GM12878 (cell line): ENCODE measurements at regions of chr2 and their contacts with region 1.

Region 1: GRCh38 chr2:33475224-33476130 is 972 bp upstream of the RASGRP3 start:
- DNase-seq: no peak
- ATAC-seq: peak; percentile 64
- H3K4me3 ChIP-seq: peak overlapping the region; percentile 91
- H3K27ac ChIP-seq: peak overlapping the region; percentile 97
- H3K4me1 ChIP-seq: peaks cover 3% of the 10 kb centered on the region; the same call in 1 of the 2 replicates
- H3K27me3 ChIP-seq: no peaks in the 10 kb centered on the region
- CTCF ChIP-seq: peak; percentile 86 to 93 (median 88)
- EP300 ChIP-seq: peak in 1 of 2 experiments; percentile 37; a peak in 1 of 4 replicates
- POLR2A ChIP-seq: peak; percentile 3; the same call in 1 of the 2 replicates
- RAD21 ChIP-seq: peak; percentile 74

Region 2: DNA sequence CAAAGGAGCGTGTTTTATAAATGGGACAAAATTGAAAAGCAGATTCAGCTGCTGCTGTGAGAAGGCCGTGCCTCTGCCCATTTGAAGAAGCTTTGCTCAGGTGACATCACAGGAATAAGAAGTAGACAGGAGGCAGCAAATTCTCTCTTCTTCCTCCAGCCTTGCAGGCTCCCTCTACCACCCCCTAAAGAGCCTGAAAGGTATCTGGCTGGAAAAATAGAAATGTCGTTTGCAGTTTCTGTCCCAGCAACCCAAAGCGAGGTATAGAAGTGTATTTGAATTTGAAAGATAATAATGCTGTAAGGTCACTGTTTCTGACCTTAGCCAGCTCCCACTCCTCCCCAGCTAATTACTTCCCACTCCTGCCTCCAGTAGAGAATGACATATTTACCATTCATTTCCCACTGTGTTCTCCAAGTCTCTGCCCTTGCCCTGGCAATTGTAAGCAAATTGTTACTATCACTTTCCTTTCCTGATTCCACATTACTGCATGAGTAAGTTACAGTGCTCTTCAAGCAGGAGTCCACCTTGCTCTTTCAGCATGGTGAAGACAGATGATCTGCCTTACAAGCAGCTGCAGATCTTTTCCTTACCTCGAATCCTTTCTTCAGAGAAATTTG is 55.8 kb before region 1 on chr2:
- CTCF ChIA-PET with region 1: no interaction called
- POLR2A ChIA-PET with region 1: no interaction called
- RAD21 ChIA-PET with region 1: no interaction called
- SMC1A ChIA-PET with region 1: no interaction called
- in situ Hi-C with region 1: no loop called
- intact Hi-C with region 1: no loop called
- DNase-seq: no peak
- ATAC-seq: no peak; the same call in 2 of the 3 replicates
- H3K4me3 ChIP-seq: no peak overlapping the region
- H3K27ac ChIP-seq: no peak overlapping the region
- H3K4me1 ChIP-seq: no peaks in the 10 kb centered on the region
- H3K27me3 ChIP-seq: no peaks in the 10 kb centered on the region
- CTCF ChIP-seq: no peak
- EP300 ChIP-seq: no peak
- POLR2A ChIP-seq: no peak
- RAD21 ChIP-seq: no peak

Region 3: DNA sequence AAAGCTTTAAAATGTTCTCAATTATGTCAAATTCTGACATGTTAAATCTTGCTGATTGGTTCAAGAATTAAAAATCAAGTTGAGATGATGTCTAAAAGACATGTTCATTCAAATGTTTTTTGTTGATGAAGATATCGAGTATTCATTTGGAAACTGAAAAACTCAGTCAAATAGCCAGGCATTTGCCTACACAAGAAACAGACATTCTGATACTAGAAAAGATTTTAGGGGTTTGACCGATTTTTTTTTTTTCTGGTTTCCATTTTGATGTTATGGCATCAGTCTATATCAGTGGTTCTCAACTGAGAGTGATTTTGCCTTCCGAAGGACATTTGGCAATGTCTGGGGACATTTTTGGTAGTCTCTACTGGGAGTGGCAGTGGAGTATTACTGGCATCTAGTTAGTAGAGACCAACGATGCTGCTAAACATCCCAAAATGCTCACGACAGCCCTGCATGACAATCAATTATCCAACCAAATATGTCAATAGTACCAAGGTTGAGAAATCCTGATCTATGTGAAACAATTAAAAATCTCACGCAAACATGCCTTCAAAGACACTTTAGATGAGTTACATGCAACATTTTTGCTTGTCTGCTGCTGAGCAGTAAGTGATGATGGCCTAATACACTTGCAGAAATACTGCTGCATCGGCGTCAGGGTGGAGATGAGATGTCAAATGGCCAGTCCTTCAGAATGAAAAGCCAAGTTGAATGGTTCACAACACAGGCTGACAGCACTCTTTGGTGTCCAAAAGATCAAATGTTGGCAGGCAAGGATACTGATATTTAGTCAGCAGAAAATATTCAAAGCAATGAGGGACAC is 13.5 kb after region 1 on chr2:
- CTCF ChIA-PET with region 1: interaction called, 26 read pairs
- POLR2A ChIA-PET with region 1: interaction called, 36 read pairs
- RAD21 ChIA-PET with region 1: interaction called, 222 read pairs
- SMC1A ChIA-PET with region 1: interaction called, 258 read pairs
- in situ Hi-C with region 1: no loop called
- intact Hi-C with region 1: no loop called
- DNase-seq: no peak
- ATAC-seq: peak; percentile 73
- H3K4me3 ChIP-seq: peak overlapping the region; percentile 31; the same call in 1 of the 2 replicates
- H3K27ac ChIP-seq: peak overlapping the region; percentile 94
- H3K4me1 ChIP-seq: peaks cover 79% of the 10 kb centered on the region
- H3K27me3 ChIP-seq: no peaks in the 10 kb centered on the region
- CTCF ChIP-seq: no peak
- EP300 ChIP-seq: peak in 1 of 2 experiments; percentile 48; a peak in 1 of 4 replicates
- POLR2A ChIP-seq: no peak
- RAD21 ChIP-seq: no peak

Region 4: DNA sequence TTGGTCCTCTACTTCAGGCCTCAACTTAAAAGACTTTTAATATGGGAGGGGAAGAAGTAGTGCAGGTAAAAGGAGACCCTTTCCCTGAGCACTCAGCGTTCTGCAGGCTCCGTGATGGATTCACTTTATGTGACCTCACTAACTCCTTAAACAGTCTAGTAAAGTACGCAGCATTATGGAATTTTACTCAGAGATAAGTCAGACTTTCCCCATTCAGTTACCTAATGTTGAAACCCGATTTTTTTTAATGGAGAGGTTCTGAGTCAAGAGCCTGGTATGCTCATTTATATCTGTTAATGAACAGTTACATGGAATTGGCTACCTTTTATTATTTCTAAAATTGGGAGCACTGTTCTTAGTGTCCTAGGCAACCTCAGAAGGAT is 35.1 kb after region 1 on chr2:
- CTCF ChIA-PET with region 1: interaction called, 6 read pairs
- POLR2A ChIA-PET with region 1: no interaction called
- RAD21 ChIA-PET with region 1: no interaction called
- SMC1A ChIA-PET with region 1: interaction called, 5 read pairs
- in situ Hi-C with region 1: no loop called
- intact Hi-C with region 1: loop called (anchors 5 kb)
- DNase-seq: no peak
- ATAC-seq: no peak
- H3K4me3 ChIP-seq: no peak overlapping the region
- H3K27ac ChIP-seq: no peak overlapping the region
- H3K4me1 ChIP-seq: no peaks in the 10 kb centered on the region; the same call in 1 of the 2 replicates
- H3K27me3 ChIP-seq: no peaks in the 10 kb centered on the region
- CTCF ChIP-seq: no peak
- EP300 ChIP-seq: no peak
- POLR2A ChIP-seq: no peak
- RAD21 ChIP-seq: no peak

Region 5: DNA sequence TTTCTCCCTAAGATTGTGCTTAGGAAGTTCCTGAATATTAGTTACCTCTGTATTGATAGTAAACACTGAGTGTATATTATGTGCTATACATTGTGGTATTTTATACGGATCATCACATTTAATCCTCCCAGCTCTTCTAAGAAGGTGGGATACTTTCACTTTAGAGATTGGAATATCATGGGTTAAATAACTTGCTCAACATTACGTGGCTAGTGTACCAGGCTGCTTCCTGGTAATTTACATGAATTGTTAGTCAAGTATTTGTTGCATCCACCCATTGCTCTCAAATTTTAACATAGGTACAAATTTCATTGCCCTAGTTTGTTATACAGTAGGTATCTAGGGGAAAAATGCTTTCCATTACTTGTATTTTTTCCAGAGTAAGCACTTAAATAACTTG is 102.2 kb after region 1 on chr2:
- CTCF ChIA-PET with region 1: interaction called, 84 read pairs
- POLR2A ChIA-PET with region 1: interaction called, 5 read pairs
- RAD21 ChIA-PET with region 1: interaction called, 104 read pairs
- SMC1A ChIA-PET with region 1: interaction called, 85 read pairs
- in situ Hi-C with region 1: no loop called
- intact Hi-C with region 1: loop called (anchors 2 kb)
- DNase-seq: no peak
- ATAC-seq: no peak
- H3K4me3 ChIP-seq: no peak overlapping the region
- H3K27ac ChIP-seq: no peak overlapping the region
- H3K4me1 ChIP-seq: no peaks in the 10 kb centered on the region
- H3K27me3 ChIP-seq: no peaks in the 10 kb centered on the region
- CTCF ChIP-seq: no peak
- EP300 ChIP-seq: no peak
- POLR2A ChIP-seq: no peak
- RAD21 ChIP-seq: no peak

Region 6: DNA sequence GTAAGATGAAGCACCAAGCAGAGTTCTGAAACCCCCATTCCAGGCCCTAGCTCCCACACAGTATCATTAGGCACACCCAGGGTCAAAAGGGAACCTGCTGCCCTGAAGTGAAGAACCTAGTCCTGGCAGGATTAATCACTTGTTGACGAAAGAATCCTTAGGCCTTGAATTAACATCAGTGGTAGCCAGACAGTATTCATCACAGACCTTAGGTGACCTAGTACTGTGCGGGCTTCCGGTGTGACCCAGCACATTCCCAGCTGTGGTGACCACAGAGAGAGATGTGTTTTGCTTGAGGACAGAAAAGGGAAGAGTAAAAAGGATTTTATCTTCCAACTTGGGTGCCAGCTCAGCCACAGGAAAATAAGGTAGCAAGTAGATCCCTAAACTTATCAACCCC is 1195.0 kb after region 1 on chr2:
- CTCF ChIA-PET with region 1: no interaction called
- POLR2A ChIA-PET with region 1: no interaction called
- RAD21 ChIA-PET with region 1: no interaction called
- SMC1A ChIA-PET with region 1: no interaction called
- in situ Hi-C with region 1: loop called (anchors 25 kb)
- intact Hi-C with region 1: no loop called
- DNase-seq: no peak
- ATAC-seq: no peak
- H3K4me3 ChIP-seq: no peak overlapping the region
- H3K27ac ChIP-seq: no peak overlapping the region
- H3K4me1 ChIP-seq: no peaks in the 10 kb centered on the region
- H3K27me3 ChIP-seq: no peaks in the 10 kb centered on the region
- CTCF ChIP-seq: no peak
- EP300 ChIP-seq: no peak
- POLR2A ChIP-seq: no peak
- RAD21 ChIP-seq: no peak